Right ventricle myocardium superior (tissue), 1 donor: ENCODE measurements at regions of chr5 and their contacts with region 1.

Region 1: GRCh38 chr5:66595756-66596635 is at the start of gene MAST4:
- DNase-seq: peak; percentile 94
- ATAC-seq: peak; percentile 95
- total RNA-seq, gene MAST4: 42.0 TPM

Region 2: DNA sequence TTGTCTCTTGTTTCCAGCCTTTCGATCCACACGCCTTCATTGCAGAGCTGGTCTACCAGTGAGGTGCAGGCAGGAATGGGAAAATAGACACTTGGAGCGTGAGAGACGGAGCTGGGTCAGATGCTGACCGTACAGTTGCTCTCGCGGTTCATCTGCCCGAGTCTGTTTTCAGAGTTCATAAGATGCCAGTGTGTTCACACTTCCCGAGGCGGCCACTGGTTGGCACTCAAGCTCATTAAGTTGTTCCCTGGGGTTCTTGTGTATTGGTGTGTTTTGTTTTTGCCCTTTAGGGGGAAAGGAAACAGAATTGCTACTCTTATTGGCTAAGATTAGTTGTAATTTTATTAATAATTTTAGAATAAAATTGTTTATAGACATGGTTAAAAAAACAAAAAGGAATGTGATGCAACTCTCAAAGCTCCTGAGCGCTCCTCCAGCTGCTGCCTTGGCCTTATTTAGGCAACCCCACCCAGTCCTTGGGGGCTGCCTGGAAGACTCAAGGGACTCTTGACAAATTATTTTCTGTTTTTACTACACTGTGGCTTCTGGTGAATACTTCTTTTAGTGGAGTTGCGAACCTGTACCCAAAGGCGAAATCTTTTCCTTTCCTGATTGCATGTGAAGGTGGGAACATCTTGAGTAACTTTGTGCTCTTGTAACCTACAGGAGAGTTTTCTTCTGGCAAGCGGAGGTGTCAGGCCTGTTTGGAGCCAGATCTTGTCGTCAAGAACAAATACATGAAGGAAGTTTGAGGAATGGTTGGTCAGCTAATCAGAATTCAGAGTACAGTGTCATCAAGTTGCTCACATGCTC is 146.3 kb after region 1 on chr5:
- intact Hi-C with region 1: loop called (anchors 10 kb)
- DNase-seq: peak; percentile 70
- ATAC-seq: peak; percentile 63

Region 3: GRCh38 chr5:66769839-66770617 is 174.0 kb after region 1 on chr5:
- intact Hi-C with region 1: no loop called
- DNase-seq: no peak
- ATAC-seq: peak; percentile 77